Natural killer cell (primary cell): ENCODE measurements at regions of chr11 and their contacts with region 1.

Region 1: GRCh38 chr11:62860835-62861563 is 19.7 kb upstream of the SLC3A2 start:
- DNase-seq: no peak
- ATAC-seq: no peak
- H3K4me3 ChIP-seq: no peak overlapping the region
- H3K4me3 Mint-ChIP-seq: no peak overlapping the region
- H3K27ac ChIP-seq: no peak overlapping the region
- H3K27ac Mint-ChIP-seq: no peak overlapping the region
- H3K4me1 ChIP-seq: peaks cover 17% of the 10 kb centered on the region
- H3K4me1 Mint-ChIP-seq: peaks cover 12% of the 10 kb centered on the region in 2 donors
- H3K27me3 ChIP-seq: no peaks in the 10 kb centered on the region
- H3K27me3 Mint-ChIP-seq: no peaks in the 10 kb centered on the region
- CTCF ChIP-seq: no peak

Region 2: GRCh38 chr11:62880803-62881578 is 20.0 kb after region 1 on chr11 and contains the start of gene SLC3A2:
- intact Hi-C with region 1: loop called (anchors 2 kb)
- DNase-seq: peak; percentile 88 to 94
- ATAC-seq: peak; percentile 72 to 89 (median 80)
- H3K4me3 ChIP-seq: peak within 1 kb of the TSS; percentile 100
- H3K4me3 Mint-ChIP-seq: peak within 1 kb of the TSS; percentile 100
- H3K27ac ChIP-seq: peak within 1 kb of the TSS; percentile 90
- H3K27ac Mint-ChIP-seq: peak within 1 kb of the TSS; percentile 99
- H3K4me1 ChIP-seq: peaks cover 36% of the 10 kb centered on the region
- H3K4me1 Mint-ChIP-seq: peaks cover 41 to 56% of the 10 kb centered on the region in 2 donors
- H3K27me3 ChIP-seq: no peaks in the 10 kb centered on the region
- H3K27me3 Mint-ChIP-seq: no peaks in the 10 kb centered on the region
- CTCF ChIP-seq: peak; percentile 82
- total RNA-seq, gene SLC3A2: 200 to 235 (median 207) TPM

Region 3: DNA sequence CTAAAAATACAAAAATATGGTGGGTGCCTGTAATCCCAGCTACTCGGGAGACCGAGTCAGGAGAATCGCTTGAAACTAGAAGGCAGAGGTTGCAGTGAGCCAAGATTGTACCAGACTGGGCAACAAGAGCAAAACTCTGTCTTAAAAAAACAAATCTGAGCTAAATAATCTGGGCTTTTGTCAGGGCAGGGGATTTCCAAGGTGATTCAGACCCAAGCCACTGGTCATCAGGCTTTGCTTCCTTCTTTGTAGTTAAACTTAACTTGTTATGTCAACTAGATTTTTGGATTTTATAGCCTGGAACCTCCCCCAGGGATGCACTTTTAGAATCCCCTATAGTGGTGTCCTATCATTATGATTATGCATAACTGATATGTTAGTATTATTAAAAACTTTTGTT is 181.6 kb after region 1 on chr11:
- intact Hi-C with region 1: no loop called
- DNase-seq: no peak
- ATAC-seq: no peak
- H3K4me3 ChIP-seq: no peak overlapping the region
- H3K4me3 Mint-ChIP-seq: no peak overlapping the region
- H3K27ac ChIP-seq: no peak overlapping the region
- H3K27ac Mint-ChIP-seq: no peak overlapping the region
- H3K4me1 ChIP-seq: no peaks in the 10 kb centered on the region
- H3K4me1 Mint-ChIP-seq: no peaks in the 10 kb centered on the region
- H3K27me3 ChIP-seq: no peaks in the 10 kb centered on the region
- H3K27me3 Mint-ChIP-seq: peaks cover 28 to 44% of the 10 kb centered on the region in 2 donors
- CTCF ChIP-seq: no peak